KBM-7 (cell line): ENCODE measurements at regions of chr2 and their contacts with region 1.

Region 1: GRCh38 chr2:26846328-26847306 is 1.3 kb upstream of the DPYSL5 start:
- DNase-seq: peak; percentile 73

Region 2: DNA sequence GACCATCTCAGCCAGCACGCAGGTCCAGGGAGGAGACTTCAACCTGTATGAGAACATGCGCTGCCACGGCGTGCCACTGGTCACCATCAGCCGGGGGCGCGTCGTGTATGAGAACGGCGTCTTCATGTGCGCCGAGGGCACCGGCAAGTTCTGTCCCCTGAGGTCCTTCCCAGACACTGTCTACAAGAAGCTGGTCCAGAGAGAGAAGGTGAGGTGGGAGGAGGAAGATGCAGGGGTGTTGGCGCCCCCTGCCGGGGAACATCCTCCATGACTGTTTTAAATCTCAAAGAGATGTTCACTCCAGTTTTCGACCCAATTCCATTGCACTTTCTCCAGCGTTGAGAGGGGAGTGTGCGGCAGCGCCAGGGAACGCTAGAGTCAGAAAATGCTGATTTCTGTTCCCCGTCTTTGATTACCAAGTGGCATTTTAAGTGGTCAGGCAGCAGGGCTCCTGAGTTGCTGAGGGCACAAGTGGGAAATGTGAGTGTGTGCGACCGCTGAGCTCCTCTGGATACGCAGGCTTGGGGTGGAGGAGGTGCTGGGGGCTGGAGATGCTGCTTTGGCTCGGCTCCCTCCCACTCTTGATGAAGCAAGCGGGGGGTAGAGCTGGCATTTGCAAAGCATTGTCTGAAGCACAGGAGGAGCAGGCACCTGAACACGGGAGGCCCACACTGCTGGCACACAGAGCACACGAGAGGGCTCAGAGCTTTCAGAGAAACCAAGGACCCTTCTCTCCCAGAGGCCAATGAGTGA is 96.1 kb after region 1 on chr2:
- in situ Hi-C with region 1: loop called (anchors 25 kb)
- DNase-seq: peak; percentile 86